ENCODE measurements at regions of chr17 and their contacts with region 1.

Region 1: GRCh38 chr17:40191237-40192208 is 14.3 kb downstream of the RAPGEFL1 start:
- DNase-seq: peak; percentile 70
- H3K4me3 Mint-ChIP-seq: peak overlapping the region; percentile 89
- H3K27ac Mint-ChIP-seq: peak overlapping the region; percentile 41
- H3K4me1 Mint-ChIP-seq: peaks cover 27% of the 10 kb centered on the region
- H3K27me3 Mint-ChIP-seq: peaks cover 8% of the 10 kb centered on the region

Region 2: GRCh38 chr17:40139566-40140058 is 51.9 kb before region 1 on chr17:
- CTCF ChIA-PET with region 1: no interaction called
- POLR2A ChIA-PET with region 1: no interaction called
- DNase-seq: no peak
- H3K4me3 Mint-ChIP-seq: peak overlapping the region; percentile 98
- H3K27ac Mint-ChIP-seq: peak overlapping the region; percentile 96
- H3K4me1 Mint-ChIP-seq: peaks cover 42% of the 10 kb centered on the region
- H3K27me3 Mint-ChIP-seq: no peaks in the 10 kb centered on the region

Region 3: GRCh38 chr17:40177275-40177874 is 14.1 kb before region 1 on chr17 and contains the start of gene RAPGEFL1:
- CTCF ChIA-PET with region 1: interaction called, 21 read pairs
- POLR2A ChIA-PET with region 1: no interaction called
- DNase-seq: peak; percentile 83
- H3K4me3 Mint-ChIP-seq: peak within 1 kb of the TSS; percentile 32
- H3K27ac Mint-ChIP-seq: peak within 1 kb of the TSS; percentile 60
- H3K4me1 Mint-ChIP-seq: peaks cover 8% of the 10 kb centered on the region
- H3K27me3 Mint-ChIP-seq: no peaks in the 10 kb centered on the region
- total RNA-seq, gene RAPGEFL1: 4.0 to 5.1 TPM

Region 4: GRCh38 chr17:40230670-40231069 is 39.1 kb after region 1 on chr17:
- CTCF ChIA-PET with region 1: no interaction called
- POLR2A ChIA-PET with region 1: interaction called, 10 read pairs
- DNase-seq: no peak
- H3K4me3 Mint-ChIP-seq: no peak overlapping the region
- H3K27ac Mint-ChIP-seq: no peak overlapping the region
- H3K4me1 Mint-ChIP-seq: no peaks in the 10 kb centered on the region
- H3K27me3 Mint-ChIP-seq: no peaks in the 10 kb centered on the region

Measured in activated CD4-positive, alpha-beta T cell treated with anti-CD3 and anti-CD28 coated beads, Interleukin-2, amount 10 ng/mL, durations not matched to agents 7 days and 5 days (primary cell).